OCI-LY7 (cell line): ENCODE measurements at regions of chr6 and their contacts with region 1.

Region 1: DNA sequence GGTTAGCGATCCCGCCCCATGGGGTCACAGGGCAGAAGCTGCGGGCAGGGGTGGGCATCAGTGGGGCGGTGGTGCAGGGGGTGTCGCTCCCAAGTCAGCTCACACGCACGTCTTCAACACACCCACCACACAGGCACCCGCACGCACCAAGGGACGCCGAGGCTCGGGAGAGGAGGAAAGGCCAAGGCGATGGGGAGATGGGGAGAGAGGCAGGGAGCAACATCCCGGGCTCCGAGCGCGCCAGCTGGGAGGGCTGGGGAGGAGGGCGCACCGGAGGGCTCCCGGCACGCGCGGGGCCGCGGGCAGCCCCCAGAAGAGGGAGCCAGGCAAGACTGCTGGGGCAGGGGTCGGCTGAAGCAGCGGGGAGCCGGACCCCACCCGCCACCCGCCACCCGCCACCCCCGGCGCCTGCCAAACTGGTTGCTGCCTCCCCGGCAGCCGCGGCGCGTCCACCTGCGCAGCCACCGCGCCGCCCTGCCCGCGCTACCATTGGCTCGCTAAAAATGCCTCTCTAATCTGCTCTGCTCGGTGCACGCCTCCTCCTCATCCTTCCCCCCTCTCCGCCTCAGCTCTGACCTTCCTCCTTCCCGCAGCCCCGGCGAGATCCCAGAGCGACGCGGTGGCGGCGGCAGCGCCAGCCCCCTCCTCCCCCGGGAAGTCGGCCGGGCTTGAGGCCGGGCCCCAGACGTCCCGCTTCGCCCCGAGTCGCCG is at the start of gene PACSIN1:
- DNase-seq: peak; percentile 80
- H3K4me3 ChIP-seq: peak within 1 kb of the TSS; percentile 79
- H3K27ac ChIP-seq: peak within 1 kb of the TSS; percentile 79
- H3K4me1 ChIP-seq: peaks cover 66% of the 10 kb centered on the region
- CTCF ChIP-seq: no peak
- total RNA-seq, gene PACSIN1: 14.9 and 19.3 TPM in 2 replicates

Region 2: DNA sequence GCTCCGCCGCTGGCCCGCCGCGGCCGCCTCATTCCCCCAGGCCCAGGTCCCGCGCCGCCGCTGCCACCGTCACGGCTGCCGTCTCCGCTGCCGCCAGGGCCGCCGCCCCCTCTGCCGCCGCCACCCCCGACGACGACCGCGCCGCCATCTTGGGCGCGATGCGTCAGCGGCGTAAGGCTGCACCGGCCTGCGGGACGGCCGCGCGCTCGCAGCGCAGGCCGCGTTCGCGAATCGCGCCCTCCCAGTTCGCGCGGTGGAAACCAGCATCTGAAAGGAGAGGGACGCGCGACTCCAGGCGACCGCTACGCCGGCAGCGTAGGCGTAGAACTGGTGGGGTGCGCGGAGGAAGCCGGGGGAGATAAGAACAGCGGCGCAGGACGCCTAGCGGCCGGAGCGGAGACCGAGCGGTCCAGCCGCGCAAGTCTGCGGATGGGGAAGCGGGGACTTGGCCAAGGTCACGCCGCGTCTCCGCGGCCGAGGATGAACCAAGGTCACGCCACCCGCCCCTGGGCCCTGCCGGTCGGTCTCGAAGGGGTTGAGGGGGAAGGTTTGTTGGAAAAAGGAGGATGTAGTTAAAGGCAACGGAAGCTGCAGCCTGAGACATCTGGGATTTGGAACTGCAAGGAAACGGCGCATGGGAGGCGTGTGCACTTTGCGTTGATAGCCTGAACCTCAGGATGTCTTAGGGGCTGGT is 73.0 kb before region 1 on chr6 and contains the start of gene NUDT3:
- CTCF ChIA-PET with region 1: no interaction called
- POLR2A ChIA-PET with region 1: no interaction called
- intact Hi-C with region 1: no loop called
- DNase-seq: peak; percentile 98
- H3K4me3 ChIP-seq: peak within 1 kb of the TSS; percentile 85
- H3K27ac ChIP-seq: peak within 1 kb of the TSS; percentile 76
- H3K4me1 ChIP-seq: peaks cover 23% of the 10 kb centered on the region
- CTCF ChIP-seq: peak; percentile 78
- total RNA-seq, gene NUDT3: 26.8 and 30.7 TPM in 2 replicates

Region 3: GRCh38 chr6:34484899-34485298 is 19.2 kb after region 1 on chr6:
- CTCF ChIA-PET with region 1: no interaction called
- POLR2A ChIA-PET with region 1: interaction called, 4 read pairs
- intact Hi-C with region 1: loop called (anchors 1 kb)
- DNase-seq: peak; percentile 91
- H3K4me3 ChIP-seq: peak overlapping the region; percentile 70
- H3K27ac ChIP-seq: peak overlapping the region; percentile 98
- H3K4me1 ChIP-seq: peaks cover 87% of the 10 kb centered on the region
- CTCF ChIP-seq: no peak

Region 4: DNA sequence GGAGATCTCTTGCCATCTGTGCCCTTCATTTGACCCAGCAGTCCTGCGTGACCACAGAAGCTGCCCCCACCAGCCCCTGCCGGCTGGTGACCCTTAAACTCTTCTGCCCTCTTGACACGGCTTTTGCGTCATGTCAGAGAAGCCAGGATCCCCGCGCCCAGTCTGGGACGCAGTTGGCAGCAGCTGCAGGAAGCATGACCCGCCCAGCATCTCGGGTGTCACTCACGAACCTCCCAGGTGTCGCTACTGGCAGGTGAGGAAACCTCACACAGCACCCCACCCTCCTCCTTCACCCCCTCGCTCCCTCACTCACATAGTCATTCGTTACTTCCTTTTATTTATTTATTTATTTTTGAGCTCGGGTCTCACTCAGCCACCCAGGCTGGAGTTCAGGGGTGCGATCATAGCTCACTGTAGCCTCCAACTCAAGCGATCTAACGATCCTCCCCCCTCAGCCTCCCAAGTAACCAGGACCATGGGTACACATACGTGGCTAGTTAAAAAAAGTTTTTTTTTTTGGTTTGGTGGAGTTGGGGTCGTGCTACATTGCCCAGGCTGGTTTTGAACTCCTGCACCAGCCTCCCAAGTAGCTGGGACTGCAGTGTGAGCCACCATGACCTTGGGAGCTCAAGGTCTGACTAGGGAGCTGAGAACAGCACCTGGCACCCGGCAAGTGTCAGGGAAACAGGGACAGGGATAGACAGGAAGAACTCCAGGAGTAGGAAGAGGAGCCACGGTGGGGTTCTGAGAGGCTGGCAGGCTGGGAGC is 104.6 kb after region 1 on chr6:
- CTCF ChIA-PET with region 1: no interaction called
- POLR2A ChIA-PET with region 1: no interaction called
- intact Hi-C with region 1: no loop called
- DNase-seq: no peak
- H3K4me3 ChIP-seq: no peak overlapping the region
- H3K27ac ChIP-seq: no peak overlapping the region
- H3K4me1 ChIP-seq: no peaks in the 10 kb centered on the region
- CTCF ChIP-seq: no peak

Region 5: DNA sequence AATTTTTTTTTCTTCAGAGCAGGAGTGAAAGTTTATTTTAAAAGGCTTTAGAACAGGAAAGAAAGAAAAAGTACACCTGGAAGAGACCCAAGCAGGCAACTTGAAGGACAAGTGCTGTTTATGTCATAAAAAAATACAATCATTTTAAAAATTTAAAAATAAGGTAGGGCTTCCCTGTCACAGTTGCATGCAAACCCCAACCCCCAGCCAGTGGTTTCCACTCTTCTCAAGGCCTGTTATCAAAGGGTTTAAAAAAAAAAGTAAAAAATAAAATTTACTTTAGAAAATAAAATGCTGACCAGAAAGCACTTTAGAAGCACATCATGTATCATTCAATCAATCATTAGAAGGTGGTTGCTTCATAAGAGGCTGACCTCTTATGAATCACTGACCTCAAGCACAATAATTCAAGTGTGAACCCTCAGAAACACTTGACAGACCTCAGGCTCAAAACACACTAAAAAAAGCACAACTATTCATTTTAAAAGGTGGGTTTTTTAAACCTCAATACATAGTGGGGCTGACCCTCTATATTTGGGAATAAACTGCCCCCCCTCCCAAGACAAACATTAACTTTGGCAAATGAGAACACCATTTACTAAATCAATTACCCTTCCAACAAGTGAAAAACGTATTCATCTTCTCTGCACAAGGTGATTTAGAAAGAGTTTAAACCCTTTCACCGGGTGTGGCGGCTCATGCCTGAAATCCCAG is 215.3 kb after region 1 on chr6:
- CTCF ChIA-PET with region 1: no interaction called
- POLR2A ChIA-PET with region 1: interaction called, 4 read pairs
- intact Hi-C with region 1: loop called (anchors 2 kb)
- DNase-seq: no peak
- H3K4me3 ChIP-seq: peak overlapping the region; percentile 46
- H3K27ac ChIP-seq: peak overlapping the region; percentile 89
- H3K4me1 ChIP-seq: peaks cover 86% of the 10 kb centered on the region
- CTCF ChIP-seq: no peak